ENCODE measurements at regions of chr1 and their contacts with region 1.

Region 1: GRCh38 chr1:163174524-163175437 is 27.9 kb downstream of the RGS5 start:
- DNase-seq: peak; percentile 67
- ATAC-seq: no peak
- H3K4me3 Mint-ChIP-seq: no peak overlapping the region
- H3K27ac Mint-ChIP-seq: no peak overlapping the region
- H3K4me1 Mint-ChIP-seq: no peaks in the 10 kb centered on the region
- H3K27me3 Mint-ChIP-seq: peaks cover 3% of the 10 kb centered on the region
- CTCF ChIP-seq: peak; percentile 79

Region 2: DNA sequence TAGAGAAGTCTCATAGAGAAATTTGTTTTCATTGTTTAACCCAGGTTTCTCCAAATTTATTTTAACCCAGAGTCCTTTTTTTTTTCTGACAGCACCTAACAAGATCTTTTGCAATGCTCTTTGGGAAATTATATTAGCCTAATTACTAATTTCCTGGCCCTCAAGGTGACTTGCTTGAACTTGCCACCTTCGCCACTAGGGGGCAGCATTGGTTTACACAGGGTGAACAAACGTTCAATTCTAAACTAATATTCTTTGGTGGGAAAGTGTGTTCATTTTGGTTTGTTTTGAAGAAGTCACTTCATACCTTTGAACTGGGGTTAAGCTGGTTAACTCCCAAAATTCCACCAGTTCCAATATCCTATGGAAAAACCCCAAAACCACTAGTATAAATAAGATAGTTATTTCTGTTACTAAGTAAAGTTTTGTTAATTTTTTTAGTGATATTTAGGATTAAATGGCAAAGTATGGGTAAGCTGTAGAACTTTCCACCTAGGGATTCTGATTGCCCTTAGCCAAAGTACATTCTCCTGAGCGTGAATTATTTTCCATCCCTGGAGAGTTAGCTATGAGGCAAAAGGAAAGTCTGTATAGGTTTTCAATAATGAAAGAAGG is 326.8 kb before region 1 on chr1:
- CTCF ChIA-PET with region 1: interaction called, 22 read pairs
- POLR2A ChIA-PET with region 1: no interaction called
- intact Hi-C with region 1: loop called (anchors 2 kb)
- DNase-seq: peak; percentile 89
- ATAC-seq: peak; percentile 65
- H3K4me3 Mint-ChIP-seq: no peak overlapping the region
- H3K27ac Mint-ChIP-seq: no peak overlapping the region
- H3K4me1 Mint-ChIP-seq: no peaks in the 10 kb centered on the region
- H3K27me3 Mint-ChIP-seq: peaks cover 7% of the 10 kb centered on the region
- CTCF ChIP-seq: peak; percentile 87

Region 3: GRCh38 chr1:162854245-162854882 is 320.4 kb before region 1 on chr1:
- CTCF ChIA-PET with region 1: interaction called, 11 read pairs
- POLR2A ChIA-PET with region 1: no interaction called
- intact Hi-C with region 1: loop called (anchors 2 kb)
- DNase-seq: peak; percentile 74
- ATAC-seq: peak; percentile 49
- H3K4me3 Mint-ChIP-seq: no peak overlapping the region
- H3K27ac Mint-ChIP-seq: no peak overlapping the region
- H3K4me1 Mint-ChIP-seq: no peaks in the 10 kb centered on the region
- H3K27me3 Mint-ChIP-seq: peaks cover 5% of the 10 kb centered on the region
- CTCF ChIP-seq: peak; percentile 70

Region 4: GRCh38 chr1:163071405-163072255 is 103.2 kb before region 1 on chr1:
- CTCF ChIA-PET with region 1: interaction called, 6 read pairs
- POLR2A ChIA-PET with region 1: no interaction called
- intact Hi-C with region 1: loop called (anchors 5 kb)
- DNase-seq: peak; percentile 63
- ATAC-seq: peak; percentile 39
- H3K4me3 Mint-ChIP-seq: no peak overlapping the region
- H3K27ac Mint-ChIP-seq: no peak overlapping the region
- H3K4me1 Mint-ChIP-seq: no peaks in the 10 kb centered on the region
- H3K27me3 Mint-ChIP-seq: peaks cover 29% of the 10 kb centered on the region
- CTCF ChIP-seq: peak; percentile 66

Region 5: GRCh38 chr1:163195728-163196448 is 21.1 kb after region 1 on chr1:
- CTCF ChIA-PET with region 1: no interaction called
- POLR2A ChIA-PET with region 1: no interaction called
- intact Hi-C with region 1: no loop called
- DNase-seq: no peak
- ATAC-seq: no peak
- H3K4me3 Mint-ChIP-seq: no peak overlapping the region
- H3K27ac Mint-ChIP-seq: no peak overlapping the region
- H3K4me1 Mint-ChIP-seq: no peaks in the 10 kb centered on the region
- H3K27me3 Mint-ChIP-seq: peaks cover 1% of the 10 kb centered on the region
- CTCF ChIP-seq: no peak

Measured in activated CD8-positive, alpha-beta T cell treated with anti-CD3 and anti-CD28 coated beads for 36 hours (primary cell).